ENCODE measurements at regions of chr14 and their contacts with region 1.

Region 1: GRCh38 chr14:56579345-56580220 is at the start of gene TMEM260:
- DNase-seq: peak; percentile 98
- ATAC-seq: peak; percentile 78
- H3K4me3 ChIP-seq: peak within 1 kb of the TSS; percentile 81
- H3K27ac ChIP-seq: peak within 1 kb of the TSS; percentile 61
- H3K4me1 ChIP-seq: peaks cover 42% of the 10 kb centered on the region
- H3K27me3 ChIP-seq: peaks cover 28% of the 10 kb centered on the region; the same call in 1 of the 2 replicates
- CTCF ChIP-seq: peak; percentile 98
- total RNA-seq, gene TMEM260: 17.8 and 28.6 TPM in 2 replicates

Region 2: DNA sequence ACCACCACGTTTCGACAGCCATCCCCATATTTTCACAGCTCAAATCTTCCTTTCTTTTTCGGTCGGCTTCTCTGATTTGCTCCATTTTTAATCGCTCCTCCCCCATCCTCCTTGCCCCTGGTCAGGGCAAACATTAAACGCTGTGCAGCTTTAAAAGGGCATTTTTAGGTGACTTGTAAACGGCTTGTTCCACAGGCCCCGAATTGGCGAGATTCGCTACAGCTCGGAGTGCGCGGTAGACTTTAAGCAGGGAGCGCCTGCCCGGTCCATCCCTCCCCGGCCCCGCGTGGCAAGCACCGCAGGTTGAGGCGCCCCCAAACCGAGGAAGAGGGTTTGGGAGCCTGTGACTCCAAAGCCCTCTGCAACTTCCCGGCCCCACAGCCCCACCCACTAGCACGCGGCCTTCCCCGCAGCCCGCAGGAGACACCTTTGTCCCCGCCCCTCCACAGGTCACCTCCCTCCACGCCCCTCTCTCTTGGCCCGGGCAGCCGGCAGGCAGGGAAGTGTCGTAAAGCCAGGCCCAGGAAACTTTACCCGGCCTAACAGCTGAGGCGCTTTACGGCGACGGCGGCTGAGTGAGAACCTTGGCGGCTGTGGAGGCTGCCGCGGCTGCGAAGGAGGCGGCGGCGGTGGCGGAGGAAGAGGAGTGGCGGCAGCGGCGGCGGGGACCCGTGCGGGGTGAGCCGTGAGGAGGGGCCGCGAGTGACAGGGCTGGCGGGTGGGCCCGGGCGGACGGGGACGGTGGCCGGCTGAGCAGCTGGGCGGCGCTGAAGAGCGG is 810.6 kb after region 1 on chr14 and contains the start of gene NAA30:
- CTCF ChIA-PET with region 1: no interaction called
- POLR2A ChIA-PET with region 1: interaction called, 3 read pairs
- intact Hi-C with region 1: loop called (anchors 5 kb)
- DNase-seq: peak; percentile 100
- ATAC-seq: peak; percentile 83
- H3K4me3 ChIP-seq: peak within 1 kb of the TSS; percentile 77
- H3K27ac ChIP-seq: peak within 1 kb of the TSS; percentile 68
- H3K4me1 ChIP-seq: peaks cover 31% of the 10 kb centered on the region
- H3K27me3 ChIP-seq: no peaks in the 10 kb centered on the region
- CTCF ChIP-seq: no peak; the same call in 1 of the 2 replicates
- total RNA-seq, gene NAA30: 23.2 and 31.2 TPM in 2 replicates

Region 3: DNA sequence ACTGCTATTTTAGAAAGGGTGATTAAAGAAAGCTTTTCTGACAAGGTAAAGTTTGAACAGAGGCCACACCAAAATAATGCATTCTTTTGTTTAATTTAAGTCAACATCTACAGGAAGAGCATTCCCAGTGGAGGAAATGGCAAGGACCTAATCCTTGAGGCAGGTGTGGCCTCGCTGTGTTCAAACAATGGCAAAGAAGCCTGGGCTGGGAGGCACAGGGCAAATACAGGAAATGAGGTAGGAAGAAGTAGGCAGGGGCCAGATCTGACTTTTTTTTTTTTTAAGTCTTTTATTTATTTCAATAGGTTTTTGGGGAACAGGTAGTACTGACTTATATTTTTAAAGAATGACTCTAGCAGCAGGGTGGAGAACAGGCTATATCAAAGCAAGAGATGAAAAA is 1518.9 kb after region 1 on chr14:
- CTCF ChIA-PET with region 1: no interaction called
- POLR2A ChIA-PET with region 1: no interaction called
- intact Hi-C with region 1: loop called (anchors 10 kb)
- DNase-seq: peak; percentile 84
- ATAC-seq: peak; percentile 92
- H3K4me3 ChIP-seq: no peak overlapping the region
- H3K27ac ChIP-seq: peak overlapping the region; percentile 30
- H3K4me1 ChIP-seq: peaks cover 25% of the 10 kb centered on the region
- H3K27me3 ChIP-seq: 0 out of 2 replicates have a peak, but pooled peaks cover 6% of the 10 kb centered on the region
- CTCF ChIP-seq: no peak